Activated naive CD4-positive, alpha-beta T cell treated with anti-CD3 and anti-CD28 coated beads, Interleukin-2, amount 10 ng/mL, durations not matched to agents 7 days and 5 days (primary cell): ENCODE measurements at regions of chr2 and their contacts with region 1.

Region 1: DNA sequence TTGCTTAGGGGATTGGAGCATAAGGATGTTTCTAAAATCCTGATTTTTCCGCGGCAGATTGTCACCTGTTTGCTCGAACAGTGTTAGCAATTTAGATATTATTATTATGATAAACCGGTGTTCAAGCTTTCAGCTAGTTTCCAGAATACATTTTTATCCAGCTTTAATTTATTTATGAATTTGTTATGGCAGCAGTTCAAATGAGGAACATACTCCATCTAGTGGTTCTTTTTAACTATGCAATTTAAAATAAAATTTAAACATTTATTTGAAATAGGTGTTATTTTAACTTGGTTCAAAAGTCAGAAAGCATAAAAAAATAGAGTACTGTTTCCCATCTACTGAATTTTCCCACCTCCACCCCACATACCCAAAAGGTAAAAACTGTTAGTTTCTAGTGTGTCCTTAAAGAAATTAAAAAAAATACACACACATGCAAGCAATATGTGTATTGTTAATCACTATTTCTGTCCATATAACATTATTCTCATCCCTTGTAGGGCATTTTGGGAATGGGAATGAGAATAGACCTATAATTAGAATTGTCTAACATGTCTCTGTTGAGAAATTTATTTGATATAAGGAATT is 23.2 kb downstream of the ACOXL start:
- DNase-seq: no peak
- H3K4me3 Mint-ChIP-seq: no peak overlapping the region
- H3K27ac Mint-ChIP-seq: no peak overlapping the region
- H3K4me1 Mint-ChIP-seq: no peaks in the 10 kb centered on the region
- H3K27me3 Mint-ChIP-seq: peaks cover 35% of the 10 kb centered on the region

Region 2: GRCh38 chr2:110678457-110679336 is 76.9 kb before region 1 on chr2:
- CTCF ChIA-PET with region 1: interaction called, 20 read pairs
- DNase-seq: peak; percentile 43
- H3K4me3 Mint-ChIP-seq: peak overlapping the region; percentile 90
- H3K27ac Mint-ChIP-seq: peak overlapping the region; percentile 94
- H3K4me1 Mint-ChIP-seq: peaks cover 42% of the 10 kb centered on the region
- H3K27me3 Mint-ChIP-seq: peaks cover 30% of the 10 kb centered on the region

Region 3: GRCh38 chr2:110925479-110925878 is 169.9 kb after region 1 on chr2:
- CTCF ChIA-PET with region 1: no interaction called
- DNase-seq: no peak
- H3K4me3 Mint-ChIP-seq: no peak overlapping the region
- H3K27ac Mint-ChIP-seq: no peak overlapping the region
- H3K4me1 Mint-ChIP-seq: no peaks in the 10 kb centered on the region
- H3K27me3 Mint-ChIP-seq: peaks cover 23% of the 10 kb centered on the region